ENCODE measurements at regions of chr16 and their contacts with region 1.

Region 1: DNA sequence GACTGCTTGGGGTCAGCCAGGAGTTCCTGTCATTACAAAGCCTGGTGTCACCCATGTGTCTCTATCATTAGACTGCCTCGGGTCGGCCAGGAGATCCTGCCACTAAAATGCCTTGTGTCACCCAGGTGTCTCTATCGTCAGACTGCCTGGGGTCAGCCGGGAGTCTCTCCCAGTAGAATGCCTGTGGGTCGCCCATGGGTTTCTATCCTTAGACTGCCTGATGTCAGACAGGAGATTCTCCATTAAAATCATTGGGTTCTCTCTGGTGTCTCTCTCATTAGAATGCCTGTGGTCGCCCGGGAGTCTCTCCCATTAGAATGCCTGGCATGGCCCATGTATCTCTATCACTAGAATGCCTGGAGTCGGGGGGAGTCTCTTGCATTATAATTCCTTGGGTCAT is 2231.0 kb downstream of the TP53TG3F start:
- DNase-seq: no peak
- ATAC-seq: no peak
- H3K4me3 ChIP-seq: no peak overlapping the region
- H3K27ac ChIP-seq: no peak overlapping the region
- H3K4me1 ChIP-seq: peaks cover 0 to 15% (median 0%) of the 10 kb centered on the region in 12 donors
- H3K27me3 ChIP-seq: no peaks in the 10 kb centered on the region
- CTCF ChIP-seq: no peak
- POLR2A ChIP-seq: no peak

Region 2: DNA sequence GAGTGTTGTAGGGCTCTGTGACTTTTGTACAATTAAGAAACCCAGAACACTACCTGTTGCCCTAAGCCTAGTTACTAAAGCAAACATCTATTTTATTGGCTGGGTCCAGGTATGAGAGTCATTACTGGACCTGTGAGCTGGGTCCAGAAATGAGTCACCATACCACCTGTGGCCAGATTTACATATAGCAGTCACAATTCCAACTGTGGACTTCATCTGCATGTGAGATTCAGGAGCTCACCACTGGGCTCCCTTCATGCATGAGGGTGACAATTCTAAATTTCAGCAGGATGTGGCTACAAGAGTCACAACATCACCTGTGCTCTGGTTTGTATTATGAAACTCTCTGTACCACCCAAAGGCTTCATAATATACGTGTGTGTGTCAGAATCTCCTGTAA is 193.0 kb before region 1 on chr16:
- intact Hi-C with region 1: no loop called
- DNase-seq: no peak
- ATAC-seq: no peak
- H3K4me3 ChIP-seq: no peak overlapping the region
- H3K27ac ChIP-seq: no peak overlapping the region
- H3K4me1 ChIP-seq: no peaks in the 10 kb centered on the region
- H3K27me3 ChIP-seq: peaks cover 0 to 3% (median 0%) of the 10 kb centered on the region in 9 donors
- CTCF ChIP-seq: no peak
- POLR2A ChIP-seq: no peak

Region 3: GRCh38 chr16:35585411-35585810 is 105.0 kb before region 1 on chr16:
- intact Hi-C with region 1: no loop called
- DNase-seq: no peak
- ATAC-seq: no peak
- H3K4me3 ChIP-seq: no peak overlapping the region
- H3K27ac ChIP-seq: no peak overlapping the region
- H3K4me1 ChIP-seq: no peaks in the 10 kb centered on the region
- H3K27me3 ChIP-seq: no peaks in the 10 kb centered on the region
- CTCF ChIP-seq: no peak
- POLR2A ChIP-seq: no peak

Region 4: GRCh38 chr16:35631261-35631945 is 59.0 kb before region 1 on chr16:
- intact Hi-C with region 1: loop called in 1 of 10 experiments (anchors 10 kb)
- DNase-seq: no peak
- ATAC-seq: peak in 1 of 4 donors; percentile 24
- H3K4me3 ChIP-seq: no peak overlapping the region
- H3K27ac ChIP-seq: no peak overlapping the region
- H3K4me1 ChIP-seq: no peaks in the 10 kb centered on the region
- H3K27me3 ChIP-seq: no peaks in the 10 kb centered on the region
- CTCF ChIP-seq: no peak
- POLR2A ChIP-seq: no peak

Region 5: GRCh38 chr16:35734728-35735402 is 44.5 kb after region 1 on chr16:
- intact Hi-C with region 1: loop called in 1 of 10 experiments (anchors 5 kb)
- DNase-seq: no peak
- ATAC-seq: no peak
- H3K4me3 ChIP-seq: no peak overlapping the region
- H3K27ac ChIP-seq: no peak overlapping the region
- H3K4me1 ChIP-seq: no peaks in the 10 kb centered on the region
- H3K27me3 ChIP-seq: no peaks in the 10 kb centered on the region
- CTCF ChIP-seq: no peak
- POLR2A ChIP-seq: no peak

Region 6: GRCh38 chr16:35751191-35751941 is 61.0 kb after region 1 on chr16:
- intact Hi-C with region 1: loop called in 1 of 10 experiments (anchors 10 kb)
- DNase-seq: no peak
- ATAC-seq: no peak
- H3K4me3 ChIP-seq: no peak overlapping the region
- H3K27ac ChIP-seq: no peak overlapping the region
- H3K4me1 ChIP-seq: no peaks in the 10 kb centered on the region
- H3K27me3 ChIP-seq: peaks cover 0 to 10% (median 0%) of the 10 kb centered on the region in 9 donors
- CTCF ChIP-seq: no peak
- POLR2A ChIP-seq: no peak

Region 7: GRCh38 chr16:35908942-35909341 is 218.5 kb after region 1 on chr16:
- intact Hi-C with region 1: no loop called
- DNase-seq: no peak
- ATAC-seq: no peak
- H3K4me3 ChIP-seq: no peak overlapping the region
- H3K27ac ChIP-seq: no peak overlapping the region
- H3K4me1 ChIP-seq: no peaks in the 10 kb centered on the region
- H3K27me3 ChIP-seq: no peaks in the 10 kb centered on the region
- CTCF ChIP-seq: no peak
- POLR2A ChIP-seq: no peak

Measured in heart left ventricle (tissue), 16 donors.